Transverse colon (tissue), 4 donors: ENCODE measurements at regions of chr1 and their contacts with region 1.

Region 1: GRCh38 chr1:235415008-235415904 is 48.0 kb downstream of the TBCE start:
- DNase-seq: peak; percentile 70
- H3K4me3 ChIP-seq: no peak overlapping the region
- H3K27ac ChIP-seq: no peak overlapping the region
- H3K4me1 ChIP-seq: peaks cover 0 to 12% (median 6%) of the 10 kb centered on the region in 4 donors
- H3K27me3 ChIP-seq: no peaks in the 10 kb centered on the region
- CTCF ChIP-seq: peak; percentile 72 to 87 (median 78)
- EP300 ChIP-seq: no peak
- POLR2A ChIP-seq: no peak

Region 2: DNA sequence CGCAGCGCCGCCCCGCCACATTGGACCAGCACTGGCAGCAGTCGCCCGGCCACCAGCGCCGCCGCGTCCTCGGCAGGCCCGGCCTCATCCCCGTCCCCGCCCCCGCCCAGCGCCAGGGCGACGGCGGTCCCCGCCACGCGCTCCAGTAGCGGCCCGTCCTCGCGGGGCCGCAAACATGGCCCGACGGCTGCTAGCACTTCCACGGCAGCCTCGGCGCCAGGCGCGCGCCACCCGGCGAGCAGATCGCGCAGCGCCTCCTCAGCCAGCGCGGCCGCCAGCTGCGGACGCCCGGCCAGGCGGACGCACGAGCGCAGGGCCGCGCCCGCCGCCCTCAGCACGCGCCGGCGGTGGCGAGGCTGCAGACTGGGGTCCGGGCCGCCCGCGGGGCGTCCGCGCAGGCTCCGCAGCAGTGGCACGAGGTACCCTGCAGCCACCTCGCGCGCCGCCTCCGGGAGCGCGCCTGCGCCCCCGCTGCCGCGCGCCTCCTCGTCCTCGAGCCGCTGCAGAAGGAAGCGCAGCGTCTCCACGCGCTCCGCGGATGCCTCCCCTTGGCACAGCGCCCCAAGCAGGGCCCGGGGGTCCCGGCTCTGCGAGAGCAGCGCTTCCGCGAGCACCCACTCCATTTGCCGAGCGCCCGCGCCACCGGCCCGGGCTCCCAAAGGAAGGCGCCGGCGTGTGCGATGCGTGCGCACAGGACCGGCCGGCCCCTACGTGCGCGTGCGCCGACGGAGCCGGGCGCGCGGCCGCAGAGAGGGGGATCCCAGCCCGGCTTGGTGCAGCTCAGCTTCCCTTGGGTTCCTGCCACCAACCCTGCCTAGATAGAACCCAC is 936.6 kb before region 1 on chr1 and contains the start of gene TARBP1:
- in situ Hi-C with region 1: loop called in 2 of 4 experiments (anchors 10 to 25 kb)
- intact Hi-C with region 1: no loop called
- DNase-seq: peak; percentile 73
- H3K4me3 ChIP-seq: peak within 1 kb of the TSS; percentile 67 to 96 (median 92)
- H3K27ac ChIP-seq: peak within 1 kb of the TSS; percentile 89 to 99 (median 96)
- H3K4me1 ChIP-seq: peaks cover 5 to 19% (median 10%) of the 10 kb centered on the region in 4 donors
- H3K27me3 ChIP-seq: no peaks in the 10 kb centered on the region
- CTCF ChIP-seq: peak in 1 of 5 experiments; percentile 11
- EP300 ChIP-seq: no peak
- POLR2A ChIP-seq: peak; percentile 64
- total RNA-seq, gene TARBP1: 19.9 to 44.4 (median 27.6) TPM

Region 3: GRCh38 chr1:234610348-234611152 is 804.7 kb before region 1 on chr1:
- in situ Hi-C with region 1: no loop called
- intact Hi-C with region 1: no loop called
- DNase-seq: peak; percentile 96
- H3K4me3 ChIP-seq: peak overlapping the region; percentile 33 to 71 (median 47)
- H3K27ac ChIP-seq: peak overlapping the region; percentile 97 to 100 (median 100)
- H3K4me1 ChIP-seq: peaks cover 29 to 40% (median 34%) of the 10 kb centered on the region in 4 donors
- H3K27me3 ChIP-seq: no peaks in the 10 kb centered on the region
- CTCF ChIP-seq: peak in 2 of 5 experiments; percentile 2 to 13
- EP300 ChIP-seq: peak; percentile 59
- POLR2A ChIP-seq: peak; percentile 89

Region 4: DNA sequence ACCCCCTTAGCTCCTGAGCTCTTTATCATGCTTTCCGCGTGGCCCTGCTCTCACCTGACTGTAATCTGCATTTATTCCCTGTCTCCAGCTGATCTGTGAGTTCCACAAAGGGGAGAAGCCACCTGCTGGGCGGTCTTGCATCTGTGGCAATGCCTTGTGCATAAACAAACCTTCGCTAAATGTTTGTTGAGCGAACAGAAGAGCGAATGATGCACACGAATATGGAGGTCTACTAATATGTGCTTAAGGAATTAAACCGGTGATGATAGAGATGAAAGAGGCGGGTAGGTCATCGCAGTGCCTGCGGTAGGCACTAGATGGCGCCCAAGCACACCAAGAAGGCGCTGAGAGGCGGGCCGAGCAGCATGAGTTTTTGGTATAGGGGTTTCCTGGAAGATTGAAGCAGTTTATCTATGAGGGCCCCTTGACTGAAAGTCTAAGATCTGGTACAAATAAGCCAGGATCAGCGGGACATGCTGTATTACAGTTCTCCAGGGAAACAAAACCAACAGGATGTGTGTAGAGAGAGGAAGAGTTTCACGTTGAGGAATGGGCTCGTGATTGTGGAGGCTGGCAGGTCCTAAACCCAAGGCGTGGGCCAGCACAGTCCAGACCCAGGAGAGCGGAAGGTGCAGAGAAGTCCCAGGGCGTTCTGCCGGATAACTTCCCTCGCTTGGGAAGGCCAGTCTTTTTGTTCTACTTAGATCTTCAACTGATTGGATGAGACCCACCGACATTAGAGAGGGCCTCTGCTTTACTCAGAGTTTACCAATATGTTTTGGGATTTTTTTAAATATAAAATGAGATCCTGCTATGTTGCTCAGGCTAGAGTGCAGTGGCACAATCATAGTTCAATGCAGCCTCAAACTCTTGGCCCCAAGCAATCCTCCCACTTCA is 321.3 kb before region 1 on chr1:
- in situ Hi-C with region 1: loop called in 1 of 4 experiments (anchors 10 kb)
- intact Hi-C with region 1: no loop called
- DNase-seq: peak; percentile 87
- H3K4me3 ChIP-seq: no peak overlapping the region
- H3K27ac ChIP-seq: peak overlapping the region in 1 of 4 donors; percentile 21
- H3K4me1 ChIP-seq: peaks cover 9 to 13% (median 11%) of the 10 kb centered on the region in 4 donors
- H3K27me3 ChIP-seq: no peaks in the 10 kb centered on the region
- CTCF ChIP-seq: peak; percentile 88 to 95 (median 93)
- EP300 ChIP-seq: no peak
- POLR2A ChIP-seq: no peak

Region 5: DNA sequence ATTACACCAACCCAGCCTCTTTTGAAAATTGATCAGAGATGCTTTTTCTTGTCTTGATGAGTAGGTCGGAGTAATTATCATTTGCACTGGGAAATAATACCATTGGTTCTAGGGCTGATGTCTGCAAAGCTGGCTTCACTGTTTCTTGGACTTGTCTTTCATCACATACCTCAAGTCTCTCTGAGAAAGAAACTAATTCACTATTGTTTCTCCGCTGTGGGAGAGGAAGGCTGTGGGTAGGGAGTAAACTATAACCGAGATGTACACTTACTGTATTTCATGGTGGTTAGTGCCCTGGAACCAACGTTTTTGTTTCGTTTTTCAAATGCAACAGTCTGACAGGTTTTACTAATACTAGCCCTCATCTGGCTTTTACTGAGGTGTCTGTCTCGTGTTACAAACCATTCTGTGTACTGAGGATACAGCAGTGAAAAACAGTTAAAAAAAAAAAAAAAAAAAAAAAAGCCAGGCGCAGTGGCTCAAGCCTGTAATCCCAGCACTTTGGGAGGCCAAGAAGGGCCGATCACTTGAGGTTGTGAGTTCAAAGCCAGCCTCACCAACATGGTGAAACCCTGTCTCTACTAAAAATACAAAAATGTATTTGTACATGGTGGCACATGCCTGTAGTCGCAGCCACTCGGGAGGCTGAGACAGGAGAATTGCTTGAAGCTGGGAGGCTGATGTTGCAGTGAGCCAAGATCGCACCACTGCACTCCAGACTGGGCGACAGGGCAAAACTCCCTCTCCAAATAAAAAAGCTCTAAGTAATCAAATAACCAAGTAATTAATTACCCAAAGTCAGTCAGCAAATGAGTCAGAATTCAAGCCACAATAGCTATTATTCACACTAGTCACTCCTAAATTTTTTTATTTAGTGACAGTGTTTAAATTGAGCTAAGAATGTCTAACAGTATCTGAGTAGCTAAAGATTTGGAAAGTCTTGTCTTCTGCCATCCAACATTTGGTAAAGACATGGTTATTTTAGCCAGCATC is 309.9 kb before region 1 on chr1:
- in situ Hi-C with region 1: loop called in 2 of 4 experiments (anchors 25 kb)
- intact Hi-C with region 1: loop called (anchors 10 kb)
- DNase-seq: no peak
- H3K4me3 ChIP-seq: no peak overlapping the region
- H3K27ac ChIP-seq: peak overlapping the region in 1 of 4 donors; percentile 42
- H3K4me1 ChIP-seq: peaks cover 6 to 20% (median 16%) of the 10 kb centered on the region in 4 donors
- H3K27me3 ChIP-seq: no peaks in the 10 kb centered on the region
- CTCF ChIP-seq: no peak
- EP300 ChIP-seq: no peak
- POLR2A ChIP-seq: no peak

Region 6: GRCh38 chr1:235246022-235246991 is 168.9 kb before region 1 on chr1:
- in situ Hi-C with region 1: loop called (anchors 5 to 10 kb)
- intact Hi-C with region 1: loop called (anchors 5 kb)
- DNase-seq: no peak
- H3K4me3 ChIP-seq: no peak overlapping the region
- H3K27ac ChIP-seq: no peak overlapping the region
- H3K4me1 ChIP-seq: peaks cover 0 to 12% (median 0%) of the 10 kb centered on the region in 4 donors
- H3K27me3 ChIP-seq: no peaks in the 10 kb centered on the region
- CTCF ChIP-seq: no peak
- EP300 ChIP-seq: no peak
- POLR2A ChIP-seq: no peak

Region 7: DNA sequence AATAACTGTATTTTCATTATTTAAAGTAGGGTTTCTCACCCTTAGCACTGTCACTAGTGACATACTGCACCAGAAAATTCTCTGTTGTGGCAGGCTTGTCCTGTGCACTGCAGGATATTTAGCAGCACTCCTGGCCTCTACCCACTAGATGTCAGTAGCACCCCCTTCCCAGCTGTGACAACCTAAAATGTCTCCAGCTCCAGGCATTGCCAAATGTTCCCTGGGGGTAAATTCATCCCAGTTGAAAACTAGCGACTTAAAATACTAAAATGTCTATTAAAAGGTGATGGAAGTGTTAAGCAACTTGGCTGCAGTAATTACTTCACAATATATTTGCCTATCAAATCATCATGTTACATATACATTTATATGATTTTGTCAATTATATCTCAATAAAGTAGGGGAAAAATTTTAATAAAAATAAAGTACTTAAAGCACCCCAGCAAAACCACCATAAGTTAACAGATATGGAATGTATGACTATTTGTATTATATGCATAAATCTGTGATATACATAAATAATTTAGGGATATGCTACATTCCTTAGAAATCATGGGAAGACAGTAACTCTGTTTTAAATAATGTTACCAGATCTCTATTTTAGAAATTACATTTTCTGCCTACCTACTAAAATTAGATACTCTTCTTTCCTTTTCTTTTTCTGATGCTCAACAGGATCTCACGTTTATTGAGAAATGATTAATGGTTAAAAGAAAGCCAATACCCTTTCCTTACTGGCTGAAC is 161.9 kb before region 1 on chr1:
- in situ Hi-C with region 1: loop called (anchors 5 to 10 kb)
- intact Hi-C with region 1: loop called (anchors 5 kb)
- DNase-seq: peak; percentile 60
- H3K4me3 ChIP-seq: no peak overlapping the region
- H3K27ac ChIP-seq: no peak overlapping the region
- H3K4me1 ChIP-seq: peaks cover 0 to 12% (median 0%) of the 10 kb centered on the region in 4 donors
- H3K27me3 ChIP-seq: no peaks in the 10 kb centered on the region
- CTCF ChIP-seq: peak; percentile 68 to 80 (median 79)
- EP300 ChIP-seq: no peak
- POLR2A ChIP-seq: no peak